Aorta (tissue), 5 donors: ENCODE measurements at regions of chrX and their contacts with region 1.

Region 1: GRCh38 chrX:9708904-9709553 is 56.6 kb downstream of the GPR143 start:
- DNase-seq: peak; percentile 89 to 94
- ATAC-seq: peak; percentile 82
- H3K4me3 ChIP-seq: no peak overlapping the region
- H3K27ac ChIP-seq: no peak overlapping the region
- H3K4me1 ChIP-seq: no peaks in the 10 kb centered on the region
- H3K27me3 ChIP-seq: no peaks in the 10 kb centered on the region

Region 2: DNA sequence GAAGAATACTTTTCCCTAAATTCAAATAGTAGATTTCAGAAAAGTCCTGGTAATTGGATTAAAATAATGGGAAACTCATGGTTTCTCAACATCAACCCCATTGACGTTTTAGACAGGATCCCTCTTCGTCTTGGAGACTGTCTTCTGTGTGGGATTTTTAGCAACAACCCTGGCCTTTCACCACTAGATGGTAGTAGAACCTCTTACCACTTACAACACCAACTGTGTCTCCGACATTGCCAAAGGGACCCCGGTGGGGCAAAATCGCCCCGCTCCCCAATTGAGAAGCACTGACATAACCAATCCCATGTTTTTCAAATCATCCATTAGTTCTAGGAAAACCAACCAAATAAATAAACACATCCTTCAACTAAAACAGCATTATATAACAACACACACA is 960.2 kb before region 1 on chrX:
- intact Hi-C with region 1: loop called in 1 of 2 experiments (anchors 5 kb)
- DNase-seq: no peak
- ATAC-seq: no peak
- H3K4me3 ChIP-seq: no peak overlapping the region
- H3K27ac ChIP-seq: no peak overlapping the region
- H3K4me1 ChIP-seq: no peaks in the 10 kb centered on the region
- H3K27me3 ChIP-seq: no peaks in the 10 kb centered on the region

Region 3: DNA sequence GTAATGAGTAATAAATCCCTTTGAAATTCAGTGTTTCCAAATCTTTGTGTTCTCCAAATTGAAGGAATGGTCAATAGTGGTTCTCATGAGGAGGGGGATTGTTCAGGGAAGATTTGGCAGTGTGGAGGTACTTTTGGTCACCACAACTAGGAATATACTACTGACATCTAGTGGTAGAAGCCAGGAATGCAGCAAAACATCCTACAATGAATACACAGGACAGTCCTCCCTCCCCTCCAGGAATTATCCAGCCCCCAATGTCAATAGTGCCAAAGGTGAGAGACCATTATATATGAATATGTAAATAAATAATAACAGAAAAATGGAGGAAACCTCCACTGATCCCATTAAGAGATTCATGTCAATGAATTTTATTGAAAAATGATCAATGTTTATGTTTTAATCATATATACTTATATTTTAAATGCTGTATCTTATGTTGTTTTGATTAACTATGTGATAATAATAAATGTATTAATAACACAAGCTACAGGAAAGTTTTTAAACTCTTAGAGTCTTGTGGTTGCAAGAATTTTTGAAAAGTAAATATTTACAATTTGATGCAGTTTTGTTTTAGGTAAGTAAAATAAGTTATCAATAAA is 893.5 kb before region 1 on chrX:
- intact Hi-C with region 1: loop called (anchors 5 to 10 kb)
- DNase-seq: no peak
- ATAC-seq: no peak
- H3K4me3 ChIP-seq: no peak overlapping the region
- H3K27ac ChIP-seq: no peak overlapping the region
- H3K4me1 ChIP-seq: no peaks in the 10 kb centered on the region
- H3K27me3 ChIP-seq: no peaks in the 10 kb centered on the region

Region 4: GRCh38 chrX:8820910-8821527 is 888.0 kb before region 1 on chrX:
- intact Hi-C with region 1: loop called (anchors 5 to 10 kb)
- DNase-seq: no peak
- ATAC-seq: no peak
- H3K4me3 ChIP-seq: no peak overlapping the region
- H3K27ac ChIP-seq: no peak overlapping the region
- H3K4me1 ChIP-seq: no peaks in the 10 kb centered on the region
- H3K27me3 ChIP-seq: no peaks in the 10 kb centered on the region

Region 5: DNA sequence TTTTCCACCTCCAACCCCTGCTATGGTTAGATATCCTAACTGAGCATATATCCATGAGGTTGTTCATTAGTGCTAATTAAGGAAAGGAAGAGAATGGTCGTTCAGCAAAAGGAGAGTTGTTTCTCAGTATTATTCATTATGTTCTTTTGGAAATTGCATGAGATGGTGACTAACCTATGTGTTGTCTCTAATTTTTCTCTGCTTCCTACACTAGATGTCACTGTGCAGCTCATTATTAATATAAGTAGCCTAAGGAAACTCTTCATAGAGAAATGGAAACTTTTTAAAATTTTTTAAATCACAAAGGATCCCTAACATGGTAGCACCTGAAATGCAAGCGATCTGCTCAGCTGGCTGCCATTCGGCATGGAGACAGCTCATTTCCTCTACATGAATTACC is 840.1 kb before region 1 on chrX:
- intact Hi-C with region 1: loop called (anchors 5 kb)
- DNase-seq: no peak
- ATAC-seq: no peak
- H3K4me3 ChIP-seq: no peak overlapping the region
- H3K27ac ChIP-seq: no peak overlapping the region
- H3K4me1 ChIP-seq: no peaks in the 10 kb centered on the region
- H3K27me3 ChIP-seq: no peaks in the 10 kb centered on the region

Region 6: DNA sequence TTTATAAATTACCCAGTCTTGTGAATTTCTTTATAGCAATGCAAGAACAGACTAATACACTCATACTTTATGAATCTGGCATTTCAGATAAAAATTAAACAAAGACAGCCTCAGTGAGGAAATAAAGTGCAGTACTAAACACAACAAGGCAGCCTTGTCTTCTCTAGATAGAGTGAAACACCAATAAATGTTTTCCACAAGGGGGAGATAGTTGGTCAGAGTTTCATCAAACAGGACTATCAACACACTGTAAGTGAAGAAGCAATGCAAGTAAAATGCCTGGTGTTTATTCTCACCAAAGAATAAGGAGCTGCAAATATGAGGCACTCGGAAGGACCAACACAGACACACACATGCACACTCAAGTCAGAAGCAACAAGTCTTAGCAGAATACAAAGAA is 737.9 kb before region 1 on chrX:
- intact Hi-C with region 1: loop called in 1 of 2 experiments (anchors 5 kb)
- DNase-seq: no peak
- ATAC-seq: no peak
- H3K4me3 ChIP-seq: no peak overlapping the region
- H3K27ac ChIP-seq: no peak overlapping the region
- H3K4me1 ChIP-seq: no peaks in the 10 kb centered on the region
- H3K27me3 ChIP-seq: no peaks in the 10 kb centered on the region

Region 7: DNA sequence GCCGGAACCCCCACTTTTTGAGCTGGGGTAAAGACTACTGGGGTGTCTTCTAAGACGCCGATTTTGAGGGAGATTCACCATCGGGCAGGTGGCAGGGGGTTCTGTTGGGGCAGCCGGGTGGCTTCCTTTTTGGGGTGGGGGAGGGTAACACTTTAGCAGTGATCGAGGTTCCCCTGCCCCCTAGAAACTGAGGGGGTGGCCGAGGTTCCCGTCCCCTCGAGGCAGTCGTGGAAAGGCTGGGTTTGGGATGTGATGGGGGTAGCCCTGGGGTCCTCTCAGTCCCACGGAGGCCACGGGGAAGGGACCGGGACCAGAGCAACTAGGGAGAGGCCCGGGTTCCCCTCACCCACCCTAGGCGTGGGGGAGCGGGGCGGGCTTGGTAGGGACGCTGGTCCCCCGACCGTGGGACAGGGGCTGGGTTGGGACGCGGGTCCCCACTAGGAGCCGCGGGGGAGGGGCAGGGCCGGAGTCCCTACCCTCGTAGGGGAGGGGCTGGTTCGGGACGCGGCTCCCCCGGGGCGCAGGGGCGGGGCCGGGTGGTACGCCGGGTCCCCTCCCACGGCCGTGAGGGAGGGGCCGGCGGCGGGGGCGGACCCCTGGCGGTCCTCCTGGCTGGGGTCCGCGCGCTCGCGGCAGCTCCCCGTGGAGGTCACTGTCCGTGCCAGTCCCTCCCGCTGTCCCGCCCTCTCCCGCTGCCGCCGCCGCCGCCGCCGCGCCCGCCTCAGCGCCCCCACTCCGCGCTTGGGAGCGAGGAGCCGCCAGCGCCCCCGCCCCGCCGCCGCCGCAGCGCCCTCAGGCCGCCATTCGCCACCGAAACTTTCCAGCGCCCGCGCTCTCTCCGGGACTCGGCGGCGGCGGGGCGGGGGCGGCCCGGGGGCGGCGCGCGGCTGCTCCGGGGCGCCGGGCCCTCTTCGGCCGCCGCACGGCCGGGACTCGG is 244.3 kb before region 1 on chrX and contains the start of gene TBL1X:
- intact Hi-C with region 1: loop called in 1 of 2 experiments (anchors 5 kb)
- DNase-seq: peak; percentile 69 to 87
- ATAC-seq: peak; percentile 71
- H3K4me3 ChIP-seq: peak within 1 kb of the TSS; percentile 95 to 99
- H3K27ac ChIP-seq: peak within 1 kb of the TSS; percentile 72 to 82
- H3K4me1 ChIP-seq: no peaks in the 10 kb centered on the region
- H3K27me3 ChIP-seq: no peaks in the 10 kb centered on the region
- total RNA-seq, gene TBL1X: 42.1 to 81.2 TPM